Activated naive CD4-positive, alpha-beta T cell treated with anti-CD3 and anti-CD28 coated beads for 36 hours (primary cell): ENCODE measurements at regions of chr10 and their contacts with region 1.

Region 1: DNA sequence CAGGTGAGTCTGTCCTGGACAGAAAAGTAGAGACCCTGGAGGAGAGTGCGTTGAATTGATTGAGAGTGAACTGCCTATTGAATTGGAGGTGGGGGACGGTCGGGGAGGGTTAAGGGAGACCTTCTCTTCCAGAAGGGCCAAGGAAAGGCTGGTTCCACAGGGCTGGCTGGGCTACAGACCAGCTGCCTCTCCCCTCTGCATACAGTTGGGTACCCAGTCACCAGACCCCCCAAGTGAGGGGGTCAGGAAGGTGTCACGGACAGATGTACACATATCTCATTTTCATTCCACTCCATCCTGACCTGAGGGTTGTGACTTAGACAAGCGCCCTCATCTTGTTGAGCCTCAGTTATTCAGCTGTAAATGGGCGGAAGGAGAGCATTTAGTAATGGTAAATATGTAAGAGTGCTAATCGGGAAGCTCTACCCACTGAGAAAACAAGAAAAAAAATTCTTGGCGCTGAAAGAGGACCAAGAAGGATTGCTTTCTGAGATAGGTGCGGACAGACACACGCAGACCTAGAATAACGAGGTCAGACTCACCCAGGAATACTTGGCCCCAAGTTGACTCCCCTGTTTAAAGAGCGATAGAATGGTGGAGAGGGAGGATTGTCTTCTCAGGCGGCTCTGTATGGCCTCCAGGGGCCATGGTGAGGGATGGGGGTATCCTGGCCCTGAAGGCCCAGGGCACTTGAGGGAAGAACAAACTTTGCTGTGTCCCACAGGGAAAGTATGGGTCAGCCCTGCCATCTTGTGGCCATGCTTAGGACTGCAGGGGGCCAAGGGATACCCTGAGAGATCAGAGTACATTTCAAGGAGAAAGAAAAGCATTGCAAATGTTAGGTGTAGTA is 7.2 kb upstream of the MBL2 start:
- DNase-seq: peak; percentile 67
- H3K4me3 Mint-ChIP-seq: no peak overlapping the region
- H3K27ac Mint-ChIP-seq: no peak overlapping the region
- H3K4me1 Mint-ChIP-seq: no peaks in the 10 kb centered on the region
- H3K27me3 Mint-ChIP-seq: no peaks in the 10 kb centered on the region

Region 2: GRCh38 chr10:52652431-52653262 is 127.1 kb before region 1 on chr10:
- CTCF ChIA-PET with region 1: no interaction called
- intact Hi-C with region 1: no loop called
- DNase-seq: no peak
- H3K4me3 Mint-ChIP-seq: no peak overlapping the region
- H3K27ac Mint-ChIP-seq: no peak overlapping the region
- H3K4me1 Mint-ChIP-seq: no peaks in the 10 kb centered on the region
- H3K27me3 Mint-ChIP-seq: no peaks in the 10 kb centered on the region

Region 3: GRCh38 chr10:52701647-52702046 is 78.1 kb before region 1 on chr10:
- CTCF ChIA-PET with region 1: no interaction called
- intact Hi-C with region 1: no loop called
- DNase-seq: no peak
- H3K4me3 Mint-ChIP-seq: no peak overlapping the region
- H3K27ac Mint-ChIP-seq: no peak overlapping the region
- H3K4me1 Mint-ChIP-seq: no peaks in the 10 kb centered on the region
- H3K27me3 Mint-ChIP-seq: no peaks in the 10 kb centered on the region

Region 4: GRCh38 chr10:52740913-52741675 is 38.7 kb before region 1 on chr10:
- CTCF ChIA-PET with region 1: interaction called, 5 read pairs
- intact Hi-C with region 1: loop called (anchors 1 kb)
- DNase-seq: peak; percentile 55
- H3K4me3 Mint-ChIP-seq: no peak overlapping the region
- H3K27ac Mint-ChIP-seq: no peak overlapping the region
- H3K4me1 Mint-ChIP-seq: no peaks in the 10 kb centered on the region
- H3K27me3 Mint-ChIP-seq: no peaks in the 10 kb centered on the region